ENCODE measurements at regions of chr20 and their contacts with region 1.

Region 1: GRCh38 chr20:59222253-59223181 is 58.9 kb downstream of the ZNF831 start:
- DNase-seq: peak; percentile 60 to 70
- H3K4me3 ChIP-seq: peak overlapping the region; percentile 51 to 81 (median 62)
- H3K27ac ChIP-seq: peak overlapping the region; percentile 70 to 82
- H3K4me1 ChIP-seq: peaks cover 4 to 7% of the 10 kb centered on the region in 2 donors
- H3K27me3 ChIP-seq: peaks cover 4 to 20% of the 10 kb centered on the region in 2 donors
- CTCF ChIP-seq: peak; percentile 53 to 88 (median 86)
- POLR2A ChIP-seq: no peak

Region 2: DNA sequence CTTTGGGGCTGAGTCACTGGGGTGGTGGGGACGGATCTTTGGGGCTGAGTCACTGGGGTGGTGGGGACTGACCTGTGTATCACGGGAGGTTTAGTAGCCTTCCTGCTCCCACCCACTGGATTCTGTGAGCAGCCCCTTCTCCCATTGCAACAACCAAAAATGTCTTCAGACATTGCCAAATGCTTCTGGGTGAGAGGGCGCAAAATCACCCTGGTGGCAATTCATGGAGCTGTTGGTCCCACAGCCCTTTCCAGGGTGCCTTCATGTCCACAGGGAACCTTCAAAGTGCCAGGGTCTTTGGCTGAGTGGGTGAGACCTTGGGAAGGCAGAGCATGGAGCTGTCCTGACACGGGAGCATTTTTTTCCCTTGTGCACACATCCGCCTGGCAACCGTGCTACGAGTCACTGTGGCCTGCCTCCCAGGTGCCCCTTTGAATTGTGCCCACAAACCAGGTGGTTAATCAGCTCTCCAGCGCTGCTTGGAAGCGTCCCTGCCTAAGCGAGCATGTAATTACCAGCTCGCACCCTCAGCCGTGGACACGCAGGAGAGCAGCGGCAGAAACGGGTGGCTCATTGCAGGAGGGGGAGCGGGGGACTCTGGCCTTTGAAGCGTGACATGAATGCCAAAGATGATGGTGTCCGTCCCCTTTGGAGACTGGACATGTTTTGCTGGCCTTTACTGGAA is 680.0 kb before region 1 on chr20:
- intact Hi-C with region 1: no loop called
- DNase-seq: peak in 1 of 2 donors; percentile 14
- H3K4me3 ChIP-seq: no peak overlapping the region
- H3K27ac ChIP-seq: no peak overlapping the region
- H3K4me1 ChIP-seq: no peaks in the 10 kb centered on the region
- H3K27me3 ChIP-seq: no peaks in the 10 kb centered on the region
- CTCF ChIP-seq: no peak
- POLR2A ChIP-seq: no peak

Region 3: GRCh38 chr20:58868795-58869194 is 353.7 kb before region 1 on chr20:
- intact Hi-C with region 1: loop called (anchors 5 kb)
- DNase-seq: no peak
- H3K4me3 ChIP-seq: no peak overlapping the region
- H3K27ac ChIP-seq: no peak overlapping the region
- H3K4me1 ChIP-seq: no peaks in the 10 kb centered on the region
- H3K27me3 ChIP-seq: no peaks in the 10 kb centered on the region
- CTCF ChIP-seq: peak in 1 of 3 donors; percentile 11
- POLR2A ChIP-seq: no peak

Region 4: GRCh38 chr20:59207742-59208357 is 14.7 kb before region 1 on chr20:
- intact Hi-C with region 1: no loop called
- DNase-seq: no peak
- H3K4me3 ChIP-seq: no peak overlapping the region
- H3K27ac ChIP-seq: no peak overlapping the region
- H3K4me1 ChIP-seq: no peaks in the 10 kb centered on the region
- H3K27me3 ChIP-seq: peaks cover 0 to 12% of the 10 kb centered on the region in 2 donors
- CTCF ChIP-seq: no peak
- POLR2A ChIP-seq: no peak

Measured in breast epithelium (tissue), 4 donors.